ENCODE measurements at regions of chr12 and their contacts with region 1.

Region 1: GRCh38 chr12:112012775-112013600 is at the starts of genes ERP29 and TMEM116:
- DNase-seq: peak; percentile 96
- ATAC-seq: peak; percentile 84
- H3K4me3 ChIP-seq: peak within 1 kb of the TSS; percentile 87 to 98
- H3K27ac ChIP-seq: peak within 1 kb of the TSS; percentile 99
- H3K4me1 ChIP-seq: peaks cover 9 to 21% of the 10 kb centered on the region in 2 experiments
- H3K27me3 ChIP-seq: no peaks in the 10 kb centered on the region
- CTCF ChIP-seq: peak in 2 of 3 experiments; percentile 38 to 52; a peak in 3 of 6 replicates
- POLR2A ChIP-seq: peak; percentile 96
- RAD21 ChIP-seq: no peak
- total RNA-seq, gene ERP29: 130 TPM
- total RNA-seq, gene TMEM116: 6.8 TPM

Region 2: DNA sequence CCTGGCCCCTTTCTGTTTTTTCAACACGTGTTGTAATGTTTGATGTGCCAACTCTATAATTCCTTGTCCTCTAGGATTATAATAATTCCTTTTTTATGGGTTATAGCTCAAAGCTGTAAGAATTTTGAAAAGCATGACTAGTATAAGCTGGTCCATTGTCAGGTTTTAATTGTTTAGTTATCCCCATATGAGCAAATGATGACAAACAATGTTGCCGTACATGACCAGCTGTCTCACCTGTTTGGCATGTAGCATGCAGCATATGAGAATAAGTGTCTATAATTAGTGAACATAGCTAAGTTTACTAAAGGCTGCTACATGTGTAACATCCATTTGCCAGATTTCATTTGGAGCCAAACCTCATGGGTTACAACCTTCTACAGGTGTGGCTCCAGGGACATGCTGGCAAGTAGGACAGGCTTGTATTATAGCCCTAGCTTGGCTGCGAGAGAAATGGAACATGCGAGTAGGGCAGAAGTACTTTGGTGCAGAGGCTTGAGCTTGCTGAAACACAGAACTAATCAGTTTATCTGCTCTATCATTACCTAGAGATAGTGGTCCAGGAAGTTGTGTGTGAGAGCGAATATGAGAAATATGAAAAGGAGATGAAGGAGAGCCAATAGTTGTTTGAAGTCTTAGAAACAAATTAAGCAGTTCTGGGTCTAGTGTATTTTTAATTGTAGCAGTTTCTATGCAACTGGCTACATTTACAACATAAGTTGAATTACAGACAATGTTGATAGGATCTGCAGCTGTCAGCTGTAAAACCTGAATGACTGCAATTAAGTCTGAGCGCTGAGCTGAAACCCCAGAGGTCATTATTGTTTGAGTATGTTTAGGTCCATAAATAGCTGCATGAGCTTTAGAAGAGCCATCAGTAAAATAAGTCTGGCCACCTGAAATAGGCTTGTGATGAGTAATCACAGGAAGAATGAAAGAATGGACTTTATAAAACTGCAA is 193.5 kb before region 1 on chr12:
- CTCF ChIA-PET with region 1: no interaction called
- POLR2A ChIA-PET with region 1: no interaction called
- RAD21 ChIA-PET with region 1: no interaction called
- intact Hi-C with region 1: loop called (anchors 1 kb)
- DNase-seq: no peak
- ATAC-seq: no peak
- H3K4me3 ChIP-seq: no peak overlapping the region
- H3K27ac ChIP-seq: no peak overlapping the region
- H3K4me1 ChIP-seq: no peaks in the 10 kb centered on the region
- H3K27me3 ChIP-seq: no peaks in the 10 kb centered on the region
- CTCF ChIP-seq: no peak
- POLR2A ChIP-seq: no peak
- RAD21 ChIP-seq: no peak

Region 3: GRCh38 chr12:111942557-111942956 is 70.4 kb before region 1 on chr12:
- CTCF ChIA-PET with region 1: interaction called, 8 read pairs
- POLR2A ChIA-PET with region 1: interaction called, 6 read pairs
- RAD21 ChIA-PET with region 1: no interaction called
- intact Hi-C with region 1: loop called (anchors 1 kb)
- DNase-seq: no peak
- ATAC-seq: no peak
- H3K4me3 ChIP-seq: no peak overlapping the region
- H3K27ac ChIP-seq: no peak overlapping the region
- H3K4me1 ChIP-seq: no peaks in the 10 kb centered on the region; a peak in 1 of 4 replicates
- H3K27me3 ChIP-seq: no peaks in the 10 kb centered on the region
- CTCF ChIP-seq: no peak
- POLR2A ChIP-seq: no peak
- RAD21 ChIP-seq: no peak

Region 4: DNA sequence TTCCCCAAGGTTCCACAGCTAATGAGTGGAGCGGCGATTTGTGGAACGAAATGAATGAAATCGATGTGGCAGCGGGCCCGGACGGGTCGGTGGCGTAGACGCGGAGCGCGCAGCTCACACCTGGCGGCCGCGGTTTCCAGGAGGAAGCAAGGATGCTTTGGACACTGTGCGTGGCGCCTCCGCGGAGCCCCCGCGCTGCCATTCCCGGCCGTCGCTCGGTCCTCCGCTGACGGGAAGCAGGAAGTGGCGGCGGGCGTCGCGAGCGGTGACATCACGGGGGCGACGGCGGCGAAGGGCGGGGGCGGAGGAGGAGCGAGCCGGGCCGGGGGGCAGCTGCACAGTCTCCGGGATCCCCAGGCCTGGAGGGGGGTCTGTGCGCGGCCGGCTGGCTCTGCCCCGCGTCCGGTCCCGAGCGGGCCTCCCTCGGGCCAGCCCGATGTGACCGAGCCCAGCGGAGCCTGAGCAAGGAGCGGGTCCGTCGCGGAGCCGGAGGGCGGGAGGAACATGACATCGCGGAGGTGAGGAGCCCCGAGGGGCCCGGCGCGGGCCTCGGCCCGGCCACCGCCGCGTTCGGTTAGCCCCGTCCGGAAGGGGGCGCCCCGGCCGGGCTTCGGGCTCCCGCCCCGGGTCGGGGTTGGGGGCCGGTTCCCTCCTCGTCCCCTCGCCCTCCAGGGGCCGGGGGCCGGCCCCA is 405.8 kb after region 1 on chr12 and contains the start of gene PTPN11:
- CTCF ChIA-PET with region 1: no interaction called
- POLR2A ChIA-PET with region 1: no interaction called
- RAD21 ChIA-PET with region 1: no interaction called
- intact Hi-C with region 1: loop called (anchors 5 kb)
- DNase-seq: peak; percentile 45
- ATAC-seq: peak; percentile 88
- H3K4me3 ChIP-seq: peak within 1 kb of the TSS; percentile 83 to 97
- H3K27ac ChIP-seq: peak within 1 kb of the TSS; percentile 94
- H3K4me1 ChIP-seq: peaks cover 6 to 11% of the 10 kb centered on the region in 2 experiments; a peak in 2 of 4 replicates
- H3K27me3 ChIP-seq: no peaks in the 10 kb centered on the region
- CTCF ChIP-seq: peak in 2 of 3 experiments; percentile 61 to 62; a peak in 4 of 6 replicates
- POLR2A ChIP-seq: peak; percentile 77
- RAD21 ChIP-seq: no peak
- total RNA-seq, gene PTPN11: 181 TPM